Caco-2 (cell line): ENCODE measurements at regions of chr5 and their contacts with region 1.

Region 1: GRCh38 chr5:9617221-9617620 is 12.9 kb downstream of the TAS2R1 start:
- DNase-seq: peak in 1 of 2 experiments; percentile 7
- H3K4me3 ChIP-seq: no peak overlapping the region
- H3K4me3 Mint-ChIP-seq: no peak overlapping the region
- H3K27ac Mint-ChIP-seq: peak overlapping the region; percentile 2
- H3K4me1 ChIP-seq: peaks cover 26% of the 10 kb centered on the region
- H3K4me1 Mint-ChIP-seq: peaks cover 30% of the 10 kb centered on the region
- H3K27me3 ChIP-seq: no peaks in the 10 kb centered on the region
- H3K27me3 Mint-ChIP-seq: no peaks in the 10 kb centered on the region
- CTCF ChIP-seq: no peak

Region 2: DNA sequence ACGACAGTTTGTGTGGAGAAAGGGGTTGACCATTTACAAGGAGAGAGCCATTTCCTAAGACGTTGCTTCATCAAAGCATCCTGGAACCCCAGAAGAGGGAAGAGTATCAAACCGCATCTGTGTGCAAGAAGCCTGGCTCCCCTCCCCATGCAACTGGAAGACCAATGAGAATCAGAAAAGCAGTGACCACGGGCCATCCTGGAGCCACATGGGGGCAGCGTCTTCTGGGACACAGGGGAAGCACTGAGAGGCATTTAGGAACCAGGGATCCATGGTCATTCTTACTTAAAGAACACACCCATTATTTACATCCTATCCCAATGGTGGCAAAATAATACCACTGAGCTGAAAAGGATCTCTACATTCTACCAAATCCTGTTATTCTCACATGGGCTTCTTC is 100.6 kb before region 1 on chr5:
- CTCF ChIA-PET with region 1: no interaction called
- POLR2A ChIA-PET with region 1: no interaction called
- intact Hi-C with region 1: loop called (anchors 1 kb)
- DNase-seq: peak; percentile 39 to 42
- H3K4me3 ChIP-seq: no peak overlapping the region
- H3K4me3 Mint-ChIP-seq: no peak overlapping the region
- H3K27ac Mint-ChIP-seq: no peak overlapping the region
- H3K4me1 ChIP-seq: no peaks in the 10 kb centered on the region
- H3K4me1 Mint-ChIP-seq: no peaks in the 10 kb centered on the region
- H3K27me3 ChIP-seq: no peaks in the 10 kb centered on the region
- H3K27me3 Mint-ChIP-seq: no peaks in the 10 kb centered on the region
- CTCF ChIP-seq: peak; percentile 17 to 47